Spleen (tissue), 13 donors: ENCODE measurements at regions of chr20 and their contacts with region 1.

Region 1: GRCh38 chr20:44683263-44684046 is 31.7 kb upstream of the CCN5 start:
- DNase-seq: no peak
- H3K4me3 ChIP-seq: no peak overlapping the region
- H3K27ac ChIP-seq: no peak overlapping the region
- H3K4me1 ChIP-seq: peaks cover 0 to 22% (median 14%) of the 10 kb centered on the region in 6 donors
- H3K27me3 ChIP-seq: no peaks in the 10 kb centered on the region
- CTCF ChIP-seq: peak in 10 of 11 experiments; percentile 32 to 83 (median 50)
- POLR2A ChIP-seq: no peak

Region 2: DNA sequence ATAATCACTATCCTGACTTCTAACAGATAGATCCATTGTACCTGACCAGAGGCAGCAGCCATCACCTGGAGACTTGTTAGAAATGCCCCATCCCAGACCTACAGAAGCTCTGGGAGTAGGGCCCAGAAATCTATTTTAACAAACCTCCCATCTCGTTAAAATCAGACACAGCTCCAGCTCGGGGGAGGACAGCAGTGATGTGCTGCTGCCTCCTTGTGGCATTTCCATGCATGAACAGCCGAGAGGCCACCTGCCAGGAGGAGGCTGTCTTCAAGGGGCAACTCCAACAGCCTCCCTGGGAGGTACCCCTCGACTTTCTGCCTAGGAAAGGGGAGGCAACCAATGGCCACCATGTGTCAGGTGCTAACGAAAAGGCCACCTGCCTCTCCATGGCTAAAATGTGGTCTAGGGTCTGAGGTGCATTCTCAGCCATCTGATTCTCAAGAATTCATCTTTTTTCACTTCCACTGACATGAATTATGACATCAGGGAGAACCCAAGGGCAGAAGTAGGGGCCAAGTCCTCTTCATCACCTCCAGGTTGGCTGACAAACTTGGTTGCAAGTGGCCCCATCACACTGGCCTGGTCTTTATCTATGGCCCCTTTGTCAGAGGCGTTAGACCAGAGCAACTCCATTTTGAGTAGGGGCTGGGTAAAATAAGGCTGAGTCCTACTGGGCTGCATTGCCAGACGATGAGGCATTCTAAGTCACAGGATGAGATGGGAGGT is 50.0 kb after region 1 on chr20:
- intact Hi-C with region 1: loop called (anchors 2 kb)
- DNase-seq: no peak
- H3K4me3 ChIP-seq: no peak overlapping the region
- H3K27ac ChIP-seq: no peak overlapping the region
- H3K4me1 ChIP-seq: peaks cover 0 to 3% (median 0%) of the 10 kb centered on the region in 6 donors
- H3K27me3 ChIP-seq: no peaks in the 10 kb centered on the region
- CTCF ChIP-seq: peak; percentile 47 to 86 (median 79)
- POLR2A ChIP-seq: no peak

Region 3: GRCh38 chr20:44861531-44862006 is 178.1 kb after region 1 on chr20:
- intact Hi-C with region 1: loop called (anchors 10 kb)
- DNase-seq: no peak
- H3K4me3 ChIP-seq: no peak overlapping the region
- H3K27ac ChIP-seq: no peak overlapping the region
- H3K4me1 ChIP-seq: peaks cover 0 to under 1% (median 0%) of the 10 kb centered on the region in 6 donors
- H3K27me3 ChIP-seq: peaks cover 0 to 3% (median 0%) of the 10 kb centered on the region in 7 donors
- CTCF ChIP-seq: no peak
- POLR2A ChIP-seq: no peak

Region 4: DNA sequence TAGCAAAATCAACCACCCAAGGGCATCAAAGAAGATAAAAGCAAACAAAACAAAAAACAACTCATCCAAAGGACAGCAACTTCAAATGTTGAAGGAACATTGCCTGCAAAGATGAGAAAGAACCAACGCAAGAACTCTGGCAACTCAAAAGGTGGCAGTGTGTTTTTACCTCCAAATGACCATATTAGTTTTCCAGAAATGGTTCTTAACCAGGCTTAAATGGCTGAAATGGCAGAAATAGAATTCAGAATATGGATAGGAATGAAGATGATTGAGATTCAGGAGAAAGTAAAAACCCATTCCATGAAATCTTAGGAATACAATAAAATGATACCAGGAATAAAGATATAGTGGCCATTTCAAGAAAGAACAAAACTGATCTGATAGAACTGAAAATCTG is 481.5 kb after region 1 on chr20:
- intact Hi-C with region 1: no loop called
- DNase-seq: no peak
- H3K4me3 ChIP-seq: no peak overlapping the region
- H3K27ac ChIP-seq: no peak overlapping the region
- H3K4me1 ChIP-seq: no peaks in the 10 kb centered on the region
- H3K27me3 ChIP-seq: peaks cover 0 to 21% (median 6%) of the 10 kb centered on the region in 7 donors
- CTCF ChIP-seq: no peak
- POLR2A ChIP-seq: no peak